ENCODE measurements at regions of chr6 and their contacts with region 1.

Region 1: DNA sequence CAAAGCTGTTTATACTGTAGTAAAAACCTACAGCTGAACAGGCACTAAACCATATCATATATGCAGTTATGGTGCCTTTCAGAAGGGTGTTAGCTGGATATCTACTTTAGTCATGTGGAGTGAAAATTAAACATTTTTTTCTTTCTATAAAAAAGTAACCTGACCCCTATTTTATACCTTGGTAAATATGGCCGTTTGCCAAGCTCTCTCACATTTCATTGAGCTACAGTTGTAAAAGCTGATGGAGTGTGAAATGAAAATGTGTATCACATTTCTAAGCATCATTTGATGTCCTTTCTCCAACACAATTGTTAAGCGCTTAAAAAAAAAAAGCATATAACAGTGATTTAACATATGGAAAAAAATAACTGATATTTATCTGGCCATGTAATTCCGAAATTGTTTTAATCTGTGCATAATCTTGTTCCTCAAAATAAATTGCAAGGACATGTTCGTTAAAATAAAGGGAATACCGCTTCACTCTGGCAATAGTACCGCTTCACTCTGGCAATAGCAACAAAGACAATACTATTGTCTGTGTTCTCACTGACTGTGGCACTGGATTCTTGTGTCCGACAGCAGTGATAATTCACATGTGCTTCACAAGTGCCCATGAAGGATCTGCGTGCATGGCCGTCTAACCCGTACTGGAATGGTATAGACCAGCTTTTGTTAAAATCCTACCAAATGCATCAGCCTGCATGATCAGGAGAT is 391.8 kb upstream of the SOX4 start:
- DNase-seq: peak; percentile 47
- H3K4me3 ChIP-seq: no peak overlapping the region
- H3K27ac ChIP-seq: peak overlapping the region in 1 of 2 experiments; percentile 99; a peak in 3 of 4 replicates
- H3K4me1 ChIP-seq: peaks cover 15 to 39% of the 10 kb centered on the region in 2 experiments; a peak in 3 of 4 replicates
- H3K27me3 ChIP-seq: no peaks in the 10 kb centered on the region
- CTCF ChIP-seq: no peak
- EP300 ChIP-seq: 0 out of 4 replicates have a peak, but pooled peaks of 1 of the 2 experiments have one; percentile 5
- RAD21 ChIP-seq: peak; percentile 32

Region 2: DNA sequence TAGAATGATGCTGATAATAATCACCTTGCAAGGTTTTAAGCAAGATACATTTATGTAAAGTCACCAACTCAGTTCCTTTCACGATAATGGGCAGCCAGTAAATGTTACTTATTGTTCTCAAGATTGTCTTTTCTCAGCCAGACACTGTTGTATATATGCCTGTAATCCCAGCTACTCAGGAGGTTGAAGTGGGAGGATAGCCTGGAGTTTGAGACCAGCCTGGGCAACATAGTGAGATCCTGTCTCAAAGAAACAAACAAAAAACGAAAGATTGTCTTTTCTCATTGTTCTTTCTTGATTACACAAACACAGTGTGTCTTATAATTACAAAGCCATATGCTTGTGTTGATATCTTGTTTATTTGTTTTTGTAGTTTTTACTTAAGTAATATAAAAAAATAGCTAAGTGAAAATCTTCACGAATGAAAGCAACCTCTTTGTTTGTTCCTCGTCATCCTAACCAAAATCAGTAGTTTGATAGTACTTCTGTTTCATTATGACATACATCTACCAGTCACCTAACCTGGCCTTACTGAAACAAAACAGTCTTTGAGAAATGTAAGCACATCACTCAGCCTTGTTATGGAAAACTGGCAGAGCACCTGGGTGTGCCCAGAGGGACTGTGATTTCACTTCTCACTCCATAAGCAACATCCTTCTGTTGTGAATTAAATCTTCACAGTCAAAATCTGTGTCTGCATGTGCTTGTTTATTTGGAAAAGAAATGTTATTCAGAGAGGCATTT is 44.4 kb before region 1 on chr6:
- CTCF ChIA-PET with region 1: interaction called, 3 read pairs
- POLR2A ChIA-PET with region 1: interaction called, 20 read pairs
- DNase-seq: peak; percentile 19
- H3K4me3 ChIP-seq: no peak overlapping the region
- H3K27ac ChIP-seq: peak overlapping the region in 1 of 2 experiments; percentile 98; a peak in 3 of 4 replicates
- H3K4me1 ChIP-seq: peaks cover 0 to 25% of the 10 kb centered on the region in 2 experiments; a peak in 2 of 4 replicates
- H3K27me3 ChIP-seq: no peaks in the 10 kb centered on the region
- CTCF ChIP-seq: no peak
- EP300 ChIP-seq: no peak
- RAD21 ChIP-seq: no peak

Region 3: DNA sequence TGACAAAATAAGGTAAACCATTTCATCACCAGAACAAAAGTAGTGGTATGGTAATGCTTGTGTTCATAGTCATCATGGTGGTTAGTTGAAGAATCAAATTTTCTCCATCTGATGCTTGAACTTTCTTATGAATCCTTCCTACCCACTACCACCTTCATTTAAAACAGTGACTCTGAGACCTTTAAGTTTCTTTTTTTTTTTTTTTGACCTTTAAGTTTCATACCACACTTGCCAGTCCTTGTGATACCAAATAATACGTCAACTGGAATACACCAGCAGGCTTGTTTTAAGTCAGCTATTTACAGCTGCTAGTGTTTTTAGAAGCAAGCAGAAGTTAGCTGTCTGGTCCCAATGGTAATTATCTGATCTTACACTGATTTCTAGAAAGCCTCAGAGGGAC is 21.6 kb before region 1 on chr6:
- CTCF ChIA-PET with region 1: no interaction called
- POLR2A ChIA-PET with region 1: no interaction called
- DNase-seq: no peak
- H3K4me3 ChIP-seq: no peak overlapping the region
- H3K27ac ChIP-seq: no peak overlapping the region; a peak in 1 of 4 replicates
- H3K4me1 ChIP-seq: peaks cover 0 to 4% of the 10 kb centered on the region in 2 experiments; a peak in 2 of 4 replicates
- H3K27me3 ChIP-seq: no peaks in the 10 kb centered on the region
- CTCF ChIP-seq: no peak
- EP300 ChIP-seq: no peak
- RAD21 ChIP-seq: no peak

Region 4: DNA sequence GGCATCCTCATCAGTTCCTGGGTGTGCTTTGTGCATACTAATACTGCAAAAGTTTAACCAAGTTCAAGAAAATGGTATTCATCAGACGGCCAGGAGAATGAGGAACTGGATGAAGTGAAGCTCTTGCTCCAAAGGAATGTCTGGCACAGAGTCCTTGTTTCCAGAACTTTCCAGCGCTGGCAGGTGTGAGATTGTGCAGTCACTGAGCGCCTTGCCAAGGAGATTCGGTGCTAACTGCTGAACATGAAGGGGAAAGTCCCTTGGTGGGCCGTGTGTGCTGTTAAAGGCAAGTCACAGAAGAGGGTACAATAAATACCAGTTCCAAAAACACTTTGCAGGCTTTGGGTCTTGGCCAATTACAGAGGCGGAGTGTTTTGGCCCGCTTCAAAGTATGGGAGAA is 129.4 kb after region 1 on chr6:
- CTCF ChIA-PET with region 1: no interaction called
- POLR2A ChIA-PET with region 1: no interaction called
- DNase-seq: no peak
- H3K4me3 ChIP-seq: no peak overlapping the region
- H3K27ac ChIP-seq: no peak overlapping the region
- H3K4me1 ChIP-seq: peaks cover 0 to 3% of the 10 kb centered on the region in 2 experiments; a peak in 1 of 4 replicates
- H3K27me3 ChIP-seq: no peaks in the 10 kb centered on the region
- CTCF ChIP-seq: no peak
- EP300 ChIP-seq: no peak
- RAD21 ChIP-seq: no peak

Region 5: GRCh38 chr6:21522797-21523456 is 321.1 kb after region 1 on chr6:
- CTCF ChIA-PET with region 1: no interaction called
- POLR2A ChIA-PET with region 1: interaction called, 15 read pairs
- DNase-seq: peak; percentile 64
- H3K4me3 ChIP-seq: peak overlapping the region; percentile 33 to 53
- H3K27ac ChIP-seq: peak overlapping the region in 1 of 2 experiments; percentile 96; a peak in 2 of 4 replicates
- H3K4me1 ChIP-seq: peaks cover 0 to 19% of the 10 kb centered on the region in 2 experiments; a peak in 2 of 4 replicates
- H3K27me3 ChIP-seq: no peaks in the 10 kb centered on the region; the same call in 1 of the 2 replicates
- CTCF ChIP-seq: peak; percentile 37; the same call in 1 of the 2 replicates
- EP300 ChIP-seq: 0 out of 4 replicates have a peak, but pooled peaks of 1 of the 2 experiments have one; percentile 10
- RAD21 ChIP-seq: peak; percentile 47